ENCODE measurements at regions of chr20 and their contacts with region 1.

Region 1: DNA sequence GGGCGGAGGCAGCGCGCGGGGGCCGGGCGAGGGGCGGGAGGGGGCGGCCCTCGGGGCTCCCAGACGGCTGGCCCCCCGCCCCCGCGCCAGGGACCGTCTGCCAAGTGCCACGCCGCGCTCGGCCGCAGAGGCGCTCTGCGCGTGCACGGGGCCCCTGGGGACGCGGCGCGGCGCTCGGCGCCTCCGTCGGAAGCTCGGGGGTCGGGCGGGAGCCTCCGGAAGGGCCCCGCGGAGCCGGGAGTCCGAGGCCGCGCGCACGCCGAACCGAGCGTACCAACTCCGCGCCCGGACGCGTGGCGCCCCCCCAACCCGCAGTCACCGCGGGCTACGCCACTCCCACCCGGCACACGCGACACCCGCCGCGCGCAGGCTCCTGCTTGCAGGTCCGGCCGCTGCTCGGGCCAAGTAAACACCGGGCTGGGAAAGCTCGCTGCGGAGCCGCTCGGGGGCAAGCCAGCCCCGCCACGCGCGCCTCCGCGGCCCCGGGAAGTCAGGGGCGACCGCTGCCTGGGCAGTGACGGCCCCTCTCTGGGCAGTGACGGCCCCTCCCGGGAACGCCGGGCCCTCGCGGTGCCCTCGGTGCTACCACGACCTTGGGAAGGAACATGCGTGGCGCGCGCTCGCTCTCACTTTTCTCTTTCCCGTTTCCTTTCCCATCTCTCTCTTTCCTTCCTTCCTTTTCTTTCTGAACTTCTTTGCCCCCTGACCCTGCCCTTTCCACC is 384 bp upstream of the PREX1 start:
- DNase-seq: peak; percentile 93
- ATAC-seq: peak; percentile 78
- H3K4me3 ChIP-seq: peak overlapping the region in 4 of 5 experiments; percentile 34 to 68 (median 56)
- H3K4me3 Mint-ChIP-seq: peak overlapping the region; percentile 89
- H3K27ac ChIP-seq: peak overlapping the region in 1 of 2 donors; percentile 66
- H3K27ac Mint-ChIP-seq: peak overlapping the region; percentile 87
- H3K4me1 ChIP-seq: peaks cover 51 to 62% of the 10 kb centered on the region in 2 donors
- H3K4me1 Mint-ChIP-seq: peaks cover 67% of the 10 kb centered on the region
- H3K27me3 ChIP-seq: no peaks in the 10 kb centered on the region
- H3K27me3 Mint-ChIP-seq: no peaks in the 10 kb centered on the region
- CTCF ChIP-seq: no peak

Region 2: GRCh38 chr20:48722737-48723191 is 105.4 kb before region 1 on chr20:
- CTCF ChIA-PET with region 1: no interaction called
- POLR2A ChIA-PET with region 1: no interaction called
- intact Hi-C with region 1: loop called (anchors 2 kb)
- DNase-seq: peak; percentile 58
- ATAC-seq: peak; percentile 55
- H3K4me3 ChIP-seq: peak overlapping the region in 1 of 5 experiments; percentile 21
- H3K4me3 Mint-ChIP-seq: peak overlapping the region; percentile 75
- H3K27ac ChIP-seq: peak overlapping the region; percentile 57 to 80
- H3K27ac Mint-ChIP-seq: peak overlapping the region; percentile 84
- H3K4me1 ChIP-seq: peaks cover 66 to 69% of the 10 kb centered on the region in 2 donors
- H3K4me1 Mint-ChIP-seq: peaks cover 73% of the 10 kb centered on the region
- H3K27me3 ChIP-seq: no peaks in the 10 kb centered on the region
- H3K27me3 Mint-ChIP-seq: no peaks in the 10 kb centered on the region
- CTCF ChIP-seq: no peak

Region 3: GRCh38 chr20:48846498-48847485 is 18.6 kb after region 1 on chr20:
- CTCF ChIA-PET with region 1: interaction called, 5 read pairs
- POLR2A ChIA-PET with region 1: interaction called, 6 read pairs
- intact Hi-C with region 1: loop called (anchors 1 kb)
- DNase-seq: peak; percentile 67
- ATAC-seq: peak; percentile 95
- H3K4me3 ChIP-seq: no peak overlapping the region
- H3K4me3 Mint-ChIP-seq: peak overlapping the region; percentile 64
- H3K27ac ChIP-seq: no peak overlapping the region
- H3K27ac Mint-ChIP-seq: peak overlapping the region; percentile 74
- H3K4me1 ChIP-seq: peaks cover 24 to 25% of the 10 kb centered on the region in 2 donors
- H3K4me1 Mint-ChIP-seq: peaks cover 41% of the 10 kb centered on the region
- H3K27me3 ChIP-seq: no peaks in the 10 kb centered on the region
- H3K27me3 Mint-ChIP-seq: no peaks in the 10 kb centered on the region
- CTCF ChIP-seq: no peak

Region 4: GRCh38 chr20:48875911-48876640 is 47.9 kb after region 1 on chr20:
- CTCF ChIA-PET with region 1: interaction called, 3 read pairs
- POLR2A ChIA-PET with region 1: interaction called, 3 read pairs
- intact Hi-C with region 1: loop called (anchors 2 kb)
- DNase-seq: no peak
- ATAC-seq: peak; percentile 77
- H3K4me3 ChIP-seq: no peak overlapping the region
- H3K4me3 Mint-ChIP-seq: peak overlapping the region; percentile 38
- H3K27ac ChIP-seq: no peak overlapping the region
- H3K27ac Mint-ChIP-seq: peak overlapping the region; percentile 78
- H3K4me1 ChIP-seq: peaks cover 11 to 13% of the 10 kb centered on the region in 2 donors
- H3K4me1 Mint-ChIP-seq: peaks cover 36% of the 10 kb centered on the region
- H3K27me3 ChIP-seq: no peaks in the 10 kb centered on the region
- H3K27me3 Mint-ChIP-seq: no peaks in the 10 kb centered on the region
- CTCF ChIP-seq: no peak

Region 5: DNA sequence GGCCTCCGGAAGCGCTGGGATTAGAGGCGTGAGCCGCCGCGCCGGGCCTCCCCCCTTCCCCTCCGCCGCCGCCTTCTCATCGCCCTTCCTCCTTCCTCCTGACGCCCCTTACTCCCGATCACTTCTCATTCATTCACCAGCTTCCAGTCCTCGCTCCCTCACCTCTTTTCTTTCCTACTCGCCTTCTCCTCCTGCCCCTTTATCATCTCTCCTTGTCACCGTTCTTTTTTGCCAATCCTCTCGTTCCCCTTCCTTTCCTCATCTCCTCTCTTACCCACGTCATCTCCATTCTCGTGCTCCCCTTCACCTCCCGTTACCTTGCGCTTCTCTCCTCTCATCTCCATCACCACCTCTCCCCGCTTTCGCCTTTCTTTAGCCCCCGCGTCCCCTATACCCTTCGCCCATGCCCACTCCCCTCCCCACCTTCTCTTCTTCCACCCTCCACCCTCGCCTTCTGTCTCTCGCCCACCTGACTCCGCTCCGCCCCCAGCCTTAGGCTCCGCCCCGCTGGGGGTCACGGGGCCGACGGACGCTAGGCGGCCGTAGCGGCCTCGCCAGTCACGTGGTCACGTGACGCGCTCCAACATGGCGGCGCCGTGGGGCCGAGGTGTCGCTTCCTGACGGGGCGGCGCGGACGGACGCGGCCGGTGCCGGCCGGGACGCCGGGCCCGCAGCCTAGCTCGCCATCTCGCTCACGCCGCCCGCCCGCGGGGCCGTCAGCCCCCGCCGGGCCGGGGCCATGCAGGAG is 93.1 kb after region 1 on chr20 and contains the start of gene ARFGEF2:
- CTCF ChIA-PET with region 1: no interaction called
- POLR2A ChIA-PET with region 1: no interaction called
- intact Hi-C with region 1: loop called (anchors 1 kb)
- DNase-seq: peak; percentile 96
- ATAC-seq: peak; percentile 92
- H3K4me3 ChIP-seq: peak within 1 kb of the TSS; percentile 59 to 91 (median 86)
- H3K4me3 Mint-ChIP-seq: peak within 1 kb of the TSS; percentile 96
- H3K27ac ChIP-seq: peak within 1 kb of the TSS; percentile 88 to 91
- H3K27ac Mint-ChIP-seq: peak within 1 kb of the TSS; percentile 95
- H3K4me1 ChIP-seq: peaks cover 47 to 55% of the 10 kb centered on the region in 2 donors
- H3K4me1 Mint-ChIP-seq: peaks cover 49% of the 10 kb centered on the region
- H3K27me3 ChIP-seq: no peaks in the 10 kb centered on the region
- H3K27me3 Mint-ChIP-seq: no peaks in the 10 kb centered on the region
- CTCF ChIP-seq: no peak
- total RNA-seq, gene ARFGEF2: 34.3 and 41.3 TPM in 2 replicates

Region 6: DNA sequence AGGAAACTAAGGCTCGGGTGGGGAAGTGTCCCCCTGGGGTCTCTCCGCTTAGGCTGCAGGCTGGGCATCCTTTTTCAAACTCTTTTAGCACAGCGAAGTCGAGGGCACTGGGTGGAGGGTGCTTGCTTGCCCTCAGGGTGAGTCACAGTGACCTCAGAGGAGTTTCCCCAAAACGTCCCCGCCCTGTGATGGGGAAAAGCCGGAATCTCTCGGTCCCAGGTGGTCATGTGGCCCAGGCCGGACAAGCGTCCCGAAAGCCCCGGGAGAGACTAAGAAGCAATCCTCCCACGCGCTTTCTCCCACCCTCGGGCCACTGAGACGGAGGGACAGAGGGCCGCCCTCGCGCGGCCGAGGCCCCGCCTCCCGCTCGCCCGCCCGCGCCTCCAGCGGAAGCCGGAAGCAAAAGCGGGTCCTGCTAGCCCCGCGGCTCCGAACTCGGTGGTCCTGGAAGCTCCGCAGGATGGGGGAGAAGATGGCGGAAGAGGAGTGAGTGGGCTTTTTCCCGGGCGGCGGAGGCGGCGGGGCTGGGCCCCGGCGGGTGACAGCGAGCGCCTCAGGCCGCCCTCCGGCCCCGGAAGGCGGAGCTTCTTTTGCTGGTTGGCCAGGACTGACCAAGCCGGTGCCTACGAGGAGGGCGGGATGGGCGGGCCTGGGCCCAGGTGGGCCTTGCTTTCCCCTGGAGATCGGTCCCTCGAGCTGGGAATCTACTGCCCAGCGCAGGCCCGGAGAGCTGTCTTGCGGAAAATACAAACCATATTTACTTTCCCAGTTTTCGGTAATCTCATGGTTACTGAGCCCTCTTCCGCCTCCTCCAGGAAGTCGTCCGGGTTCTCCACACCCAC is 984.5 kb after region 1 on chr20 and contains the start of gene SLC9A8:
- CTCF ChIA-PET with region 1: no interaction called
- POLR2A ChIA-PET with region 1: no interaction called
- intact Hi-C with region 1: loop called (anchors 10 kb)
- DNase-seq: peak; percentile 93
- ATAC-seq: peak; percentile 89
- H3K4me3 ChIP-seq: peak within 1 kb of the TSS; percentile 81 to 97 (median 87)
- H3K4me3 Mint-ChIP-seq: peak within 1 kb of the TSS; percentile 97
- H3K27ac ChIP-seq: peak within 1 kb of the TSS; percentile 93 to 98
- H3K27ac Mint-ChIP-seq: peak within 1 kb of the TSS; percentile 94
- H3K4me1 ChIP-seq: peaks cover 24 to 31% of the 10 kb centered on the region in 2 donors
- H3K4me1 Mint-ChIP-seq: peaks cover 47% of the 10 kb centered on the region
- H3K27me3 ChIP-seq: no peaks in the 10 kb centered on the region
- H3K27me3 Mint-ChIP-seq: no peaks in the 10 kb centered on the region
- CTCF ChIP-seq: peak; percentile 35
- total RNA-seq, gene SLC9A8: 24.2 and 29.7 TPM in 2 replicates